Mammary epithelial cell (primary cell): ENCODE measurements at regions of chr16 and their contacts with region 1.

Region 1: DNA sequence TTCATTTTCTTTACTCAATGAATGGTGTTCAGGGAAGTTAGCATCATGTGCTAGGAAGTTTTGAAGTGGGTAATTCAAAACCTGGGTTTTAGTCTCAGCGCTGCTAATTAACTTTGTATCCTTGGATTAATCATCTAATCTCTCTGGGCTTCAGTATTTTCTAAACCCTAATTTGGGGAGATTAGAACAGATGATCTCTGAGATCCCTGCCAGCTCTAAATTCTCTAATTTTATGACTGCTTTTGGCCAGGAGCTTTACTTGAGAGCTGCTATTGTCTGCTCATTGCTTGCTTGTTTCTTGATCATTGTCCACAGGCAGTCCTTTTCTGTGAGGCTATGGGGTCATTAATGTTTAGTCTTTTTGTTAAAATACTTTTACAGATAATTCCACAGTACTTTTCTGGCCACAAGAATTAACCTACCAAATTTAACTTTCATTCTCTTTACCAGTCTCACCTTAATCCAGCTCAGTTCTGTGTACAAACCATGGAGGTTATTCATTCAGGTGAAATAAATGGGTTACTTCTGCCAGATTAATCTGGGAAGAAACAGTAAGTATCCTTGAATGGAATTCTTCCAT is 28.4 kb upstream of the VWA3A start:
- DNase-seq: no peak
- H3K4me3 ChIP-seq: no peak overlapping the region
- H3K27ac ChIP-seq: peak overlapping the region; percentile 59
- H3K4me1 ChIP-seq: peaks cover 38% of the 10 kb centered on the region
- H3K27me3 ChIP-seq: no peaks in the 10 kb centered on the region
- CTCF ChIP-seq: no peak

Region 2: GRCh38 chr16:22014271-22014873 is 49.6 kb before region 1 on chr16:
- CTCF ChIA-PET with region 1: no interaction called
- dilution Hi-C with region 1: loop called (anchors 10 kb)
- in situ Hi-C with region 1: no loop called
- intact Hi-C with region 1: no loop called
- DNase-seq: no peak
- H3K4me3 ChIP-seq: no peak overlapping the region
- H3K27ac ChIP-seq: no peak overlapping the region
- H3K4me1 ChIP-seq: peaks cover 44% of the 10 kb centered on the region
- H3K27me3 ChIP-seq: no peaks in the 10 kb centered on the region
- CTCF ChIP-seq: no peak

Region 3: GRCh38 chr16:22023505-22023904 is 40.5 kb before region 1 on chr16:
- CTCF ChIA-PET with region 1: no interaction called
- dilution Hi-C with region 1: loop called (anchors 10 kb)
- in situ Hi-C with region 1: no loop called
- intact Hi-C with region 1: loop called (anchors 1 kb)
- DNase-seq: no peak
- H3K4me3 ChIP-seq: no peak overlapping the region
- H3K27ac ChIP-seq: peak overlapping the region; percentile 1
- H3K4me1 ChIP-seq: peaks cover 49% of the 10 kb centered on the region
- H3K27me3 ChIP-seq: no peaks in the 10 kb centered on the region
- CTCF ChIP-seq: no peak

Region 4: DNA sequence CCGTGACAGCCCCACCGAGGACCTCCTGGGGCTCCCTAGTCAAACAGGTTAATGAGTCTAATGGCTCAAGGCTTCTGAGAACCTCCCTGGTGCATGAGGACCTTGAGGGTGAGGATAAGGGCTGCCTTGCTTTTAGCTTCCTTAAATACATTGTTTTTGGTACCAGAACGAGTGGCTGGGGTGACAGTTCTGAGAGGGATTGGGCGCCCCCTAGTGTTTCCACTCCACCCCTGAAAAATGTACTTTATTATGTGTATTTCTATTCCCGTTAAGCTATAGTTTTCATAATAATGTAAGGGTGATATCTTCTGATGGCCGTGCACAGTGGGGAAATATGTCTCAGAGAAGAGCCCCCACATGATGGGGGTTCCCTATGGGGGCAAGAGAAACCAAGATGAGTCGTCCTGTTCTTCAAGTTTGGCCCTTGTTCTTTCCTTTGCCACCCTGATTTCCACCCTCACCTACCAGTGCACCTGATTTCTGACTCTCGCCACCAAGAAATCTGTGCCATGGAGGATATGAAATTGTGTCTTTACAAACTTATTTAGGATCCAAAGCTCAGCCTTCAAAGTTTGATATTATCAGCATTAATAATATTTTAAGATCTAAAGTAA is 13.8 kb after region 1 on chr16:
- CTCF ChIA-PET with region 1: interaction called, 12 read pairs
- dilution Hi-C with region 1: no loop called
- in situ Hi-C with region 1: no loop called
- intact Hi-C with region 1: no loop called
- DNase-seq: peak; percentile 37
- H3K4me3 ChIP-seq: no peak overlapping the region
- H3K27ac ChIP-seq: no peak overlapping the region
- H3K4me1 ChIP-seq: peaks cover 25% of the 10 kb centered on the region
- H3K27me3 ChIP-seq: no peaks in the 10 kb centered on the region
- CTCF ChIP-seq: peak; percentile 60 to 80

Region 5: GRCh38 chr16:22109258-22109898 is 45.4 kb after region 1 on chr16:
- CTCF ChIA-PET with region 1: no interaction called
- dilution Hi-C with region 1: no loop called
- in situ Hi-C with region 1: no loop called
- intact Hi-C with region 1: no loop called
- DNase-seq: no peak
- H3K4me3 ChIP-seq: no peak overlapping the region
- H3K27ac ChIP-seq: no peak overlapping the region
- H3K4me1 ChIP-seq: no peaks in the 10 kb centered on the region
- H3K27me3 ChIP-seq: peaks cover 16% of the 10 kb centered on the region
- CTCF ChIP-seq: no peak